PC-9 (cell line): ENCODE measurements at regions of chr15 and their contacts with region 1.

Region 1: GRCh38 chr15:76196269-76197231 is 114.7 kb downstream of the ETFA start:
- DNase-seq: peak; percentile 61 to 77
- H3K4me3 ChIP-seq: no peak overlapping the region
- H3K27ac ChIP-seq: peak overlapping the region; percentile 58
- H3K4me1 ChIP-seq: peaks cover 35% of the 10 kb centered on the region
- H3K27me3 ChIP-seq: no peaks in the 10 kb centered on the region
- CTCF ChIP-seq: no peak

Region 2: GRCh38 chr15:76217029-76217428 is 20.5 kb after region 1 on chr15:
- CTCF ChIA-PET with region 1: no interaction called
- POLR2A ChIA-PET with region 1: interaction called, 4 read pairs
- intact Hi-C with region 1: loop called (anchors 2 kb)
- DNase-seq: peak; percentile 34 to 78
- H3K4me3 ChIP-seq: no peak overlapping the region
- H3K27ac ChIP-seq: peak overlapping the region; percentile 28; the same call in 1 of the 2 replicates
- H3K4me1 ChIP-seq: peaks cover 40% of the 10 kb centered on the region
- H3K27me3 ChIP-seq: no peaks in the 10 kb centered on the region
- CTCF ChIP-seq: no peak

Region 3: GRCh38 chr15:76336254-76337058 is 139.9 kb after region 1 on chr15 and contains the start of gene ISL2:
- CTCF ChIA-PET with region 1: interaction called, 4 read pairs
- POLR2A ChIA-PET with region 1: interaction called, 14 read pairs
- intact Hi-C with region 1: loop called (anchors 2 kb)
- DNase-seq: no peak
- H3K4me3 ChIP-seq: no peak within 1 kb of the TSS
- H3K27ac ChIP-seq: no peak within 1 kb of the TSS
- H3K4me1 ChIP-seq: no peaks in the 10 kb centered on the region
- H3K27me3 ChIP-seq: no peaks in the 10 kb centered on the region
- CTCF ChIP-seq: no peak
- total RNA-seq, gene ISL2: 0.24 and 0.63 TPM in 2 replicates

Region 4: GRCh38 chr15:76359152-76359551 is 162.6 kb after region 1 on chr15:
- CTCF ChIA-PET with region 1: no interaction called
- POLR2A ChIA-PET with region 1: no interaction called
- intact Hi-C with region 1: no loop called
- DNase-seq: no peak
- H3K4me3 ChIP-seq: no peak overlapping the region
- H3K27ac ChIP-seq: no peak overlapping the region
- H3K4me1 ChIP-seq: peaks cover 4% of the 10 kb centered on the region; the same call in 1 of the 2 replicates
- H3K27me3 ChIP-seq: no peaks in the 10 kb centered on the region
- CTCF ChIP-seq: no peak

Region 5: DNA sequence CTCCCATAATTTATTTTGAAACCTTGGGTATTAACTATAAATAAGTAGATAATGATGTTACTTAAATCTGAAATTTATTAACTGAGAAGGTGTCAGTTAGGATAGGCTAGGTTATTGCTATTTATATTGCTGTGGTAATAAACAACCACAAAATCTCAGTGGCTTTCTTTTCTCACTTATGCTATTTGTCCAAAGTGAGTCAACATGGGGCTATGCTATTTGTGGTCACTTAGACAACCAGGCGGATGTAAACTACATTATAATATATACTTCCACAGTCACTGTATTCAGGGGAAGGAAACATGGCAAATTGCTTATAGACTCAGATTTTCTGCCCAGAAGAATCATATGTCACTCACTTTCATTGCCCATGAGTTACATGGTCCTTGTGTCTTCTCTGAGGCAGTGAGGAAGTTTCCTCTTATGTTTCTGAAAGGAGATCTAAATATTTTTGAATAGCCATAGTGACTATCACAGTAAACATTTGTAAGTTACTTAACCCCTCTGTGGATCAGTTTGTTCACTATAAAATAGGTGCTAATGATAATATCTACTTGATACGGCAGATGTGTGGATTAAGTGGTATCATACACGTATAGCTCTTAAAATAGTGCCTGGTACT is 1243.9 kb after region 1 on chr15:
- CTCF ChIA-PET with region 1: no interaction called
- POLR2A ChIA-PET with region 1: interaction called, 16 read pairs
- intact Hi-C with region 1: no loop called
- DNase-seq: peak; percentile 8 to 71
- H3K4me3 ChIP-seq: no peak overlapping the region
- H3K27ac ChIP-seq: no peak overlapping the region
- H3K4me1 ChIP-seq: peaks cover 12% of the 10 kb centered on the region
- H3K27me3 ChIP-seq: no peaks in the 10 kb centered on the region
- CTCF ChIP-seq: no peak